Cardiac septum (tissue), 1 donor: ENCODE measurements at regions of chr9 and their contacts with region 1.

Region 1: DNA sequence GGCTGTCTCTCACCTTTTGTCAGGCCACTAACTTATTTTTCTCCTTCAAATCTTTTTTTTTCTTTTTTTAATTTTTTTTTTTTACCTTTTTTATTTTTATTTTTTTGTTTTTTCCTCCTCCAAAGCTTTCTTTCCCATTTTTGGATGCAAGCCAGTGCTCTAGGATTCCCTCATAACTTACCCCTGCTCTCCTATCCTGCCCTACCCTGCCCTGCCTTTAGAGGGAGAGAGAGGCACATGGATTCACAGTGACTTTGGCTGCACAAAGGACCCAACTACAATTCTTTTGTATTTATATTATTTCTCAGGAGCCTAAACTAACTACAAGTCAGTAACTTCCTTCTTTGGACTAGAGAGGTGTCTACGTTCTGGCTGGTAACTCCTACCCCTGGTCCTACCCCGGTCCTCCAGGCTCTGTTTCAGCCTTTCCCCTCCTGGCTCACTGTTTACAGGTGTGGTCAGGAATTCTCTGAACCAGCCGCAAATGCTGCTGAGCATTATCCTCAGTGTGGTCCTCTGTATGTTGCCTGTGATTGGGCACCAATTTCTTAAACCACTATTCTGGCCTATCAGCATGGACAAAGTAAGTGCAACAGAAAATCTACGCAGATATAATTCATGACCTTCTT is 8.4 kb upstream of the RUSC2 start:
- DNase-seq: no peak

Region 2: GRCh38 chr9:35116898-35117551 is 364.4 kb before region 1 on chr9:
- intact Hi-C with region 1: loop called (anchors 1 kb)
- DNase-seq: peak; percentile 94

Region 3: GRCh38 chr9:35258676-35259474 is 222.6 kb before region 1 on chr9:
- intact Hi-C with region 1: loop called (anchors 2 kb)
- DNase-seq: peak; percentile 78

Region 4: DNA sequence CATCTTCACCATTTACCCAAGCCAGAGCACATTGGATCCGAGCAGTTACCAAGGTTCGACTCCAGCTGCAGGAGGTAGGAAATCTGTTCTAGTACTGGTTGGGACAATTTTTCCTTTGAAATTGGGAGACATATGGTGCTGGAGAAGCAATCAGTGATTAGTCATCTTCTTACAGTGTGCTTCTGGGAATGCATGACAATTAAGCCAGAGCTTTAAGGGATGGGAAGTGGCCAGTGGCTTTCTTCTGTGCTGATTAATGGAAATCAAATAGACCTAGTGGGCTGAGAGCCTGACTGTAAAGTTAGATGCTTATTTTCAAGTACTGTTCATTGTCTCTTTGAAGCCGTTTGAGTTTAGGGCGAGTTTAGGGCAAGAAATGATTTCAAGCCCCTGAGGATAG is 167.5 kb before region 1 on chr9:
- intact Hi-C with region 1: loop called (anchors 5 kb)
- DNase-seq: no peak

Region 5: GRCh38 chr9:35553670-35554543 is 72.4 kb after region 1 on chr9:
- intact Hi-C with region 1: loop called (anchors 2 kb)
- DNase-seq: no peak